ENCODE measurements at regions of chr6 and their contacts with region 1.

Region 1: DNA sequence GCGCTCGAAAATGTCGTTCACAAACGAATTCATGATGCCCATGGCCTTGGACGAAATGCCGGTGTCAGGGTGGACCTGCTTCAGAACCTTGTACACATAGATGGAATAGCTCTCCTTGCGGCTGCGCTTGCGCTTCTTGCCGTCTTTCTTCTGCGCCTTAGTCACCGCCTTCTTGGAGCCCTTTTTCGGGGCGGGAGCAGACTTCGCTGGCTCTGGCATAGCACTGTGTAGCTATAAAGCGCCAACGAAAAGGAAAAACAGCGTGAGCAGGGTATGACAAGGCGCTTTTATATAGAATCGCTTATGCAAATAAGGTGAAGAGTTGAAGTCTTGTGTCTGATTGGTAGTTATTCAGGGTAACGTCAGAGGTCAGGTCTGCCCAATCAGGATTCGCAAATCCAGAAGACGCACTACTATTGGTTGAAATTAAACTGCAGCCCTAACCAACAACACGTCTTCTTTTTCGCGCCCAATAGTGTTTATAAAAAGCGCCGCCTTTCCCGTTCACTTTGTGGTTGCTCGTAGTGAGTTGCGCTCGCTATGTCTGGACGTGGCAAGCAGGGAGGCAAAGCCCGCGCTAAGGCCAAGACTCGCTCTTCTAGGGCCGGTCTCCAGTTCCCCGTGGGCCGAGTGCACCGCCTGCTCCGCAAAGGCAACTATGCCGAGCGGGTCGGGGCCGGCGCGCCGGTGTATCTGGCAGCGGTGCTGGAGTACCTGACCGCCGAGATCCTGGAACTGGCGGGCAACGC is 114.8 kb upstream of the PRSS16 start:
- DNase-seq: peak; percentile 90
- ATAC-seq: peak; percentile 76
- H3K4me3 Mint-ChIP-seq: no peak overlapping the region
- H3K27ac Mint-ChIP-seq: no peak overlapping the region
- H3K4me1 Mint-ChIP-seq: peaks cover 46% of the 10 kb centered on the region
- H3K27me3 Mint-ChIP-seq: no peaks in the 10 kb centered on the region

Region 2: GRCh38 chr6:26183581-26184366 is 948.9 kb before region 1 on chr6:
- POLR2A ChIA-PET with region 1: interaction called, 16 read pairs
- DNase-seq: peak; percentile 78
- ATAC-seq: peak; percentile 85
- H3K4me3 Mint-ChIP-seq: peak overlapping the region; percentile 96
- H3K27ac Mint-ChIP-seq: peak overlapping the region; percentile 99
- H3K4me1 Mint-ChIP-seq: peaks cover 48% of the 10 kb centered on the region
- H3K27me3 Mint-ChIP-seq: no peaks in the 10 kb centered on the region

Region 3: GRCh38 chr6:26216356-26216885 is 916.3 kb before region 1 on chr6:
- POLR2A ChIA-PET with region 1: interaction called, 33 read pairs
- DNase-seq: peak; percentile 77
- ATAC-seq: peak; percentile 75
- H3K4me3 Mint-ChIP-seq: no peak overlapping the region
- H3K27ac Mint-ChIP-seq: no peak overlapping the region
- H3K4me1 Mint-ChIP-seq: peaks cover 32% of the 10 kb centered on the region
- H3K27me3 Mint-ChIP-seq: no peaks in the 10 kb centered on the region

Region 4: GRCh38 chr6:27146706-27147505 is 14.2 kb after region 1 on chr6:
- POLR2A ChIA-PET with region 1: interaction called, 888 read pairs
- DNase-seq: peak; percentile 83
- ATAC-seq: peak; percentile 71
- H3K4me3 Mint-ChIP-seq: no peak overlapping the region
- H3K27ac Mint-ChIP-seq: no peak overlapping the region
- H3K4me1 Mint-ChIP-seq: peaks cover 18% of the 10 kb centered on the region
- H3K27me3 Mint-ChIP-seq: no peaks in the 10 kb centered on the region

Region 5: GRCh38 chr6:27230758-27231111 is 98.0 kb after region 1 on chr6:
- POLR2A ChIA-PET with region 1: no interaction called
- DNase-seq: no peak
- ATAC-seq: no peak
- H3K4me3 Mint-ChIP-seq: no peak overlapping the region
- H3K27ac Mint-ChIP-seq: no peak overlapping the region
- H3K4me1 Mint-ChIP-seq: peaks cover 7% of the 10 kb centered on the region
- H3K27me3 Mint-ChIP-seq: peaks cover 63% of the 10 kb centered on the region

Region 6: GRCh38 chr6:27312146-27312949 is 179.6 kb after region 1 on chr6 and contains the start of gene POM121L2:
- POLR2A ChIA-PET with region 1: no interaction called
- DNase-seq: peak; percentile 71
- ATAC-seq: peak; percentile 54
- H3K4me3 Mint-ChIP-seq: peak within 1 kb of the TSS; percentile 81
- H3K27ac Mint-ChIP-seq: no peak within 1 kb of the TSS
- H3K4me1 Mint-ChIP-seq: peaks cover 7% of the 10 kb centered on the region
- H3K27me3 Mint-ChIP-seq: peaks cover 67% of the 10 kb centered on the region
- total RNA-seq, gene POM121L2: not detected

Region 7: DNA sequence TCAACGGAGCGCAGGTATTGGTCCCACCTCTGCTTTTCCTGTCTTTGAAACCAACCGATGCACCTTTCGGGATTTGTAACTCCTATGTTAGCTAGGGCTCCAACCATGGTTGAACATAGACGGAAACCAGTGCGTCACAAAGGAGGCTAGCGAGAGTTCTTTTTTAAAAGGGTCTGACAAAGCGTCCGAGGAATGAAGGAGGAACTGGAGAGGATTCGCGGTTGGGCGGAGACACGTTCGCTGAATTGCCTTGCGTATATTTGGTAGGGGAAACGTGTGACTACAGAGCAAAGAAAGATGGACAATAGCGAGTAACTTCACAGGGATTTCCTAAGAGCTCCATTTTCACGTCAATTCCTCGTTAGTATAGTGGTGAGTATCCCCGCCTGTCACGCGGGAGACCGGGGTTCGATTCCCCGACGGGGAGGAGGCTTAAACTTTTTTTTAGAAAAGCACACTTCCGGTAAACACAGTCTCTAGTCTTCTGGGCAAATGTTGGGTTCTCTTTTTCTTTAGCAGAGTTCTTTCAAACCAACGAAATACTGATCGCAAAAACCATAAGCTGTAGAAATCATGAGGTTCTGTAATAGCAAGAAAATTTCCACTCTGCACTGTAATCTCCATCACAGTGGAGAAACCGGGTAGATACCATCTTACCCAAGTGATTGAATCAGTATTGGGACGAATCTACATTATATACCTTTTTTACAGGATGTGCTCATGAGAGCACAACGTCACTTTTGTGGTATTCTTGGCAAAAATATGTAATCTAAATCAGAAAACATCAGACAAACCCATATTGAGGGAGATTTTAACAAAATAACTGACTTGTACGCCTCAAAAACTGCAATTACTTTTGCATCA is 346.8 kb after region 1 on chr6:
- POLR2A ChIA-PET with region 1: interaction called, 12 read pairs
- DNase-seq: peak; percentile 90
- ATAC-seq: peak; percentile 59
- H3K4me3 Mint-ChIP-seq: no peak overlapping the region
- H3K27ac Mint-ChIP-seq: no peak overlapping the region
- H3K4me1 Mint-ChIP-seq: peaks cover 9% of the 10 kb centered on the region
- H3K27me3 Mint-ChIP-seq: peaks cover 2% of the 10 kb centered on the region

Region 8: GRCh38 chr6:27838058-27838944 is 705.6 kb after region 1 on chr6:
- POLR2A ChIA-PET with region 1: interaction called, 63 read pairs
- DNase-seq: peak; percentile 84
- ATAC-seq: peak; percentile 74
- H3K4me3 Mint-ChIP-seq: no peak overlapping the region
- H3K27ac Mint-ChIP-seq: no peak overlapping the region
- H3K4me1 Mint-ChIP-seq: peaks cover 26% of the 10 kb centered on the region
- H3K27me3 Mint-ChIP-seq: peaks cover 2% of the 10 kb centered on the region

Measured in activated naive CD8-positive, alpha-beta T cell treated with anti-CD3 and anti-CD28 coated beads, Interleukin-2, amount 10 ng/mL, durations not matched to agents 7 days and 5 days (primary cell).